ENCODE measurements at regions of chr20 and their contacts with region 1.

Region 1: DNA sequence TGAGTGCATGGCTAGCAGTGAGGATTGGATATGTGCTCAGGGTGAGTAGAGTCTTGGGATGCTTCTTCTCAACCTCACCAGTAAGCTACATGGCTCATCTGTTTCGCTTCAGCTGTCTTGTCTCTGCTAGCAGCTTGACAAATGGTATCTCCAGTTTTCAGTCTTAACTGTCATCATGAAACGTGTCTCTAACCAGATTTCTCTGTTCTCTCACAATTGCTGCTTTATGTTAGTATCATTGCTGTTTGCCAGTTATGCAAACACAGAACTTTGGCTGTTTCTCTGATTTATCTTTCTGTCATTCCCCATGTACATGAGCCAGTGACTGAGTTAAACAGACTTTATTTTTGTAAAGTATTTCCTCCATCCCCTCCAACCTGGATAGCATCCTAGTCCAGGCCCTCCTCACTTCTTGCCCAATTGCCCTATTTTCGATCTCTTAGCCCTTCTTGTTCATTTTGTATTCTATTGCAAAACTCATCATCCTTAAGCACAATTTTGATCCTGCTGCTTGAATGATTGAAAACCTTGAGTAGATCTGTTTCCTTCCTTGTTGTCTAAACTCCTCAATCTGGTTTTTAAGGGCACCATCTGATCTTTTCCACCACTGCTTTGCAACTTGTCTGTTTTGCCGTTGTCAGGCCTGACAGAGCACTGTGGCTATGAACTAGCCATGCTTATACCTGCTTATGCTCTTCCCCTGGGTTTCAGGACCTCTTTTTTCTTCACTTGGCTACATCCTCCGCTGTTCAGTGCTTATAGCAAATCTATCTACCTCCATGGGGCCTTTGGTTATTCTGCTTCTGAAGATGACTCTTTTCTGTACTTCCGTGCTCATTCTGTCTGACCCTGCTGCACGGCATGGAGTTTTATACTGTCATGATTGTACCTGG is 37.7 kb upstream of the ADIG start:
- DNase-seq: no peak
- ATAC-seq: no peak
- H3K4me3 ChIP-seq: no peak overlapping the region
- H3K27ac ChIP-seq: no peak overlapping the region
- H3K4me1 ChIP-seq: peaks cover 6% of the 10 kb centered on the region; the same call in 1 of the 2 replicates
- H3K27me3 ChIP-seq: no peaks in the 10 kb centered on the region
- CTCF ChIP-seq: no peak
- EP300 ChIP-seq: no peak
- POLR2A ChIP-seq: no peak
- RAD21 ChIP-seq: no peak

Region 2: GRCh38 chr20:38485041-38485440 is 58.2 kb before region 1 on chr20:
- CTCF ChIA-PET with region 1: no interaction called
- POLR2A ChIA-PET with region 1: no interaction called
- in situ Hi-C with region 1: loop called (anchors 10 kb)
- intact Hi-C with region 1: no loop called
- DNase-seq: no peak
- ATAC-seq: no peak
- H3K4me3 ChIP-seq: no peak overlapping the region
- H3K27ac ChIP-seq: no peak overlapping the region
- H3K4me1 ChIP-seq: no peaks in the 10 kb centered on the region
- H3K27me3 ChIP-seq: no peaks in the 10 kb centered on the region
- CTCF ChIP-seq: no peak
- EP300 ChIP-seq: no peak
- POLR2A ChIP-seq: no peak
- RAD21 ChIP-seq: no peak

Region 3: GRCh38 chr20:38873050-38873581 is 329.9 kb after region 1 on chr20:
- CTCF ChIA-PET with region 1: no interaction called
- POLR2A ChIA-PET with region 1: no interaction called
- in situ Hi-C with region 1: no loop called
- intact Hi-C with region 1: no loop called
- DNase-seq: no peak
- ATAC-seq: no peak
- H3K4me3 ChIP-seq: no peak overlapping the region
- H3K27ac ChIP-seq: no peak overlapping the region
- H3K4me1 ChIP-seq: 0 out of 2 replicates have a peak, but pooled peaks cover 7% of the 10 kb centered on the region
- H3K27me3 ChIP-seq: peaks cover 7 to 45% of the 10 kb centered on the region in 2 experiments; a peak in 4 of 5 replicates
- CTCF ChIP-seq: no peak
- EP300 ChIP-seq: no peak
- POLR2A ChIP-seq: no peak
- RAD21 ChIP-seq: no peak

Measured in HepG2 (cell line).